ENCODE measurements at regions of chr4 and their contacts with region 1.

Region 1: GRCh38 chr4:88659055-88659889 is 38.4 kb downstream of the NAP1L5 start:
- DNase-seq: peak; percentile 52
- ATAC-seq: peak; percentile 84
- H3K4me3 Mint-ChIP-seq: no peak overlapping the region
- H3K27ac Mint-ChIP-seq: no peak overlapping the region
- H3K4me1 Mint-ChIP-seq: peaks cover 10% of the 10 kb centered on the region
- H3K27me3 Mint-ChIP-seq: no peaks in the 10 kb centered on the region

Region 2: GRCh38 chr4:88523325-88524129 is 135.7 kb before region 1 on chr4 and contains the start of gene PYURF:
- CTCF ChIA-PET with region 1: interaction called, 23 read pairs
- POLR2A ChIA-PET with region 1: interaction called, 4 read pairs
- DNase-seq: peak; percentile 76
- ATAC-seq: peak; percentile 86
- H3K4me3 Mint-ChIP-seq: peak within 1 kb of the TSS; percentile 95
- H3K27ac Mint-ChIP-seq: peak within 1 kb of the TSS; percentile 88
- H3K4me1 Mint-ChIP-seq: peaks cover 47% of the 10 kb centered on the region
- H3K27me3 Mint-ChIP-seq: no peaks in the 10 kb centered on the region
- total RNA-seq, gene PYURF: 43.7 to 48.7 TPM

Region 3: GRCh38 chr4:88591787-88592599 is 67.3 kb before region 1 on chr4 and contains the start of gene HERC3:
- CTCF ChIA-PET with region 1: interaction called, 13 read pairs
- POLR2A ChIA-PET with region 1: interaction called, 3 read pairs
- DNase-seq: peak; percentile 87
- ATAC-seq: peak; percentile 96
- H3K4me3 Mint-ChIP-seq: peak within 1 kb of the TSS; percentile 86
- H3K27ac Mint-ChIP-seq: peak within 1 kb of the TSS; percentile 79
- H3K4me1 Mint-ChIP-seq: peaks cover 34% of the 10 kb centered on the region
- H3K27me3 Mint-ChIP-seq: peaks cover 5% of the 10 kb centered on the region
- total RNA-seq, gene HERC3: 22.7 to 26.1 TPM

Region 4: GRCh38 chr4:88893961-88894360 is 234.7 kb after region 1 on chr4:
- CTCF ChIA-PET with region 1: no interaction called
- POLR2A ChIA-PET with region 1: no interaction called
- DNase-seq: no peak
- ATAC-seq: no peak
- H3K4me3 Mint-ChIP-seq: no peak overlapping the region
- H3K27ac Mint-ChIP-seq: no peak overlapping the region
- H3K4me1 Mint-ChIP-seq: no peaks in the 10 kb centered on the region
- H3K27me3 Mint-ChIP-seq: no peaks in the 10 kb centered on the region

Measured in activated CD8-positive, alpha-beta T cell treated with anti-CD3 and anti-CD28 coated beads, Interleukin-2, amount 10 ng/mL, durations not matched to agents 7 days and 5 days (primary cell).